Dendritic cell treated with granulocyte-macrophage colony-stimulating factor and Interleukin-4, amounts not matched to agents 40 ng/mL and 50 ng/mL, for 4 days (primary cell): ENCODE measurements at regions of chr1 and their contacts with region 1.

Region 1: DNA sequence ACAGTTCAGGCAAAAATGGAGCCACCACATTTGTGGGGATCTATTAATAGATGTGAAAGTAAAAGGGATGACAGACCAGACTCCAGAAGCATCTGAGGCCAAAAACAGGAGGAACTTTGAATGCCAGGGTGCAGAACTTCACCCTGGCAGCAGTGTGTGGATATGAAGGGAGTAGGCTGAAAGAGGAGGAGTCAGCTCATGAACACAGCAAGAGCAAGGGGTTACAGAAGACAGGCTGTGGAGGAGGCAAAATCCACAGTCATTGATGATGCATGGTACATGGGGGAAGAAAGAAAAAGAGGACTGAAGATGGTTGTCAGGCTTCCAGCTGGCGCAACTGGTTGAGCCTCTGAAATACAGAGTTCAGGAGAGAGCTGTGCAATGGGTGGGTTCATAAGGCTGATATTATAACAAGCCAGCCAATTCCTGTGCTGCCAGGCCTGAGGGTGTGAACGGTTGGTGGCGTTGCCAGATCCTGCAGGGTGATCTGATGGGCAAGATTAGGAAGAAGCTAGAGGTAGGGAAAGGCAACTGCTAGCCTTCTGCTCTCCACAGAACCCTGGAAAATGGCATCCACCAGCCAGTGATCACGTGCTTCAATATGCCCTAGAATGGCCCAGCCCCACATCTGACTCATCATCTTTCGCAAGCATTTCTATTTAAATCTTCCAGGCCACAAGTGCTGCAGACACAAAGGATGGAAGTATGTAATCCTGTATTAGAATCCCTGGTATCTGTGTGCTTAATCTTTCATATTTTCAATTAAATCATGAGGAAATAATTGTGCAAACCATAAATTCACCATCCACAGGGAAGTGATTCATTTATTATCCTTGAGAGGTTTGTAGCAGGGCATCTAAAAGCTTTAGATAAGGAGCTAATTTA is 81.9 kb downstream of the SLC25A24 start:
- H3K4me3 Mint-ChIP-seq: no peak overlapping the region
- H3K27ac Mint-ChIP-seq: peak overlapping the region; percentile 75
- H3K4me1 Mint-ChIP-seq: peaks cover 40% of the 10 kb centered on the region
- H3K27me3 Mint-ChIP-seq: no peaks in the 10 kb centered on the region

Region 2: GRCh38 chr1:108049178-108049819 is 69.0 kb before region 1 on chr1:
- intact Hi-C with region 1: loop called (anchors 5 kb)
- H3K4me3 Mint-ChIP-seq: peak overlapping the region; percentile 33
- H3K27ac Mint-ChIP-seq: no peak overlapping the region
- H3K4me1 Mint-ChIP-seq: peaks cover 49% of the 10 kb centered on the region
- H3K27me3 Mint-ChIP-seq: no peaks in the 10 kb centered on the region

Region 3: GRCh38 chr1:108075055-108075454 is 43.2 kb before region 1 on chr1:
- intact Hi-C with region 1: loop called (anchors 5 kb)
- H3K4me3 Mint-ChIP-seq: no peak overlapping the region
- H3K27ac Mint-ChIP-seq: peak overlapping the region; percentile 83
- H3K4me1 Mint-ChIP-seq: peaks cover 48% of the 10 kb centered on the region
- H3K27me3 Mint-ChIP-seq: no peaks in the 10 kb centered on the region